Dendritic cell treated with granulocyte-macrophage colony-stimulating factor and Interleukin-4, amounts not matched to agents 40 ng/mL and 50 ng/mL, for 4 days (primary cell): ENCODE measurements at regions of chr1 and their contacts with region 1.

Region 1: DNA sequence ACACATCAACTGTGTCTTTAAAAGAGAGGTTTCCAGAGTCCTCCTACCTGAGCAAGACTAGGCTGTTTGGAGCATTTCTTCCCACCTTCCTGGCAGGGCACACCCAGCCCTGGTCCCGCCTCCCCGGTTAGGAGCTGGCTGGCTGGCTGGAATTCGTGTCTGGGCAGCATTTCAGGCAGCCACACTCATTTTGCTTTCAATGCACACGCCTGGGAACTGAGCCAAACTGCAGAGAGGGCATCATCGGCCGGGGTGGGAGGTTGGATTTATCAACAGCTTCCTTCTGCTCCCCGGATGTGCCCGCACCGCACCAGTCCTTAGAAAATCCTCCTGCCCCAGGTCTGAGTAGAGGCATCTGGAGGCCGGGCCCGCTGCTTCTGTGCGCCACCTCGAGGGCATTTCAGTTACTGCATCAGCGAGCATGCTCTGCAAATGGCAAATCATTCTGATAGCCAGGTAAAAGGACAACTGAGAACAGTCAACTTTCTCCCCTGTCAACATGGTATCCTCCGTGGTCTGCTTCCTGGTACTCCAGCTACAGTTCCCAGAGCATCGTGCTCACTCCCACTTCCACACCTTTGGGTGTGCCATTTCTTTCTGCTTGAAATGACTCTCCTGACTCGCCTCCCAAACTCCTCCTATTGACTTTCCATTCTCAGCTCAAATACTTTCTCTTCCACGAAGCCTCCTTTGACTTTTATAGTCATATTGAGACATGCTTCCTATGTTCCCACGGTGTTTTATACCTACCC is 20.6 kb downstream of the TCEA3 start:
- H3K4me3 Mint-ChIP-seq: no peak overlapping the region
- H3K27ac Mint-ChIP-seq: no peak overlapping the region
- H3K4me1 Mint-ChIP-seq: peaks cover 41% of the 10 kb centered on the region
- H3K27me3 Mint-ChIP-seq: no peaks in the 10 kb centered on the region

Region 2: DNA sequence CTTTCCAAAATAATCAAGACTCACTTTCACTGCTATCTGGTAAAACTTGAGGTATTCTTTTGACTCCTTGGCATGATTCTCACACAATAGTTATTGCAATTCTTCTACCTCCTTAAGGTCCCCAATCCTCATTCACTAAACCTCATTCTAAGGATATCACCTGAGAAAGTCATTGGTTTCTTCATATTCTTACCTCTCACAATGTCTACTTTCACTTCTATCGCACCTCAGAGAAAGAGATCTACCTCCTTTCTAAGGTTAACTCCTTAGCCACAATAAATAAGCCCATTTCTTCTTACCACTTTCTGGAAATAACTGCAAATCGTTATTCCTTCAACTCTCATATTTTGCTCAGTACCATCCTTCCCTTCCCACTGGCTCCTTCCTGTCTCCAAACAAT is 78.5 kb before region 1 on chr1:
- intact Hi-C with region 1: loop called (anchors 5 kb)
- H3K4me3 Mint-ChIP-seq: no peak overlapping the region
- H3K27ac Mint-ChIP-seq: no peak overlapping the region
- H3K4me1 Mint-ChIP-seq: peaks cover 11% of the 10 kb centered on the region
- H3K27me3 Mint-ChIP-seq: no peaks in the 10 kb centered on the region

Region 3: DNA sequence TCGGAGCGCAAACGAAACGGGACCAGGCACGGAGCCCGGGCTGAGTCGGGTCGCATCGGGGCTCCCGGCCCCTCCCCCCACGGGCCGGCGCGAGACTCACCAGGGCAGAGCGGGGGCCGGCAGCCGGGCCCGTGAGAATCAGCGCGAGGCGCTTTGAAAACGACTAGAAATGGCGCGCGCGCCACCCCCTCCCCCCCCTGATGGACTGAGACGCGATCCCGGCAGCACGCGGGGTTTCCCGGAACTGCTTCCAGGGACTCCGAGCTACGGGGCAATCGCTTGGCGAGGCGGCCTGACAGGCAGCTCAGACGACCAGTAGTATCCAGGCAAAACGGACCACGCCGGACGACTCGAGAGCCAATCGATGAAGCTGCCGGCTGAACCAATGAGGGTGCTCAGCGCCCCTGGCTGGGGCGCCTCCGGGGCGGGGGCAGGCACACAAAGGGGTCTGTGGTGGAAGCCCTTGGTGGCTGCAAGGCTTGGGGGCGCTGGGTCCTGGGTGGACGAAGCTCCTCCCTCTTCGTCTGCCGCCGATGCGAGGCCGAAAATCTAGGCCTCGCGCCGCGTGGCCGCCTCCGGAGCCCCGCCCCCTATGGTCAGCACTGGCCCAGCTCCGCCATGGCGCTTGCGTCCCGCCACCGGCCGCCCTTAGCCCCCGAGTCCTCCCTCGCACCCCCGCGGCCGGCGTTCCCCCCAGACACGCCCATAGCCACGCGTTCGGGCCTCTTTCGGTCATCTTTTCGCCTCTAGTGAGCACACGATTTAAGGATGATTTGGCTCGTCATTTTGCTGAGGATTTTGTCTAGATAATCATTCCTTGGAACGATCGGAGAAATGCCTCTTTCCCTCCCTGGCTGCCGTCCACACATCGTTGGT is 59.6 kb before region 1 on chr1 and contains the start of gene HNRNPR:
- intact Hi-C with region 1: loop called (anchors 2 kb)
- H3K4me3 Mint-ChIP-seq: peak within 1 kb of the TSS; percentile 88
- H3K27ac Mint-ChIP-seq: peak within 1 kb of the TSS; percentile 97
- H3K4me1 Mint-ChIP-seq: peaks cover 42% of the 10 kb centered on the region
- H3K27me3 Mint-ChIP-seq: no peaks in the 10 kb centered on the region

Region 4: GRCh38 chr1:23367791-23368561 is 35.9 kb before region 1 on chr1:
- intact Hi-C with region 1: loop called (anchors 2 kb)
- H3K4me3 Mint-ChIP-seq: peak overlapping the region; percentile 98
- H3K27ac Mint-ChIP-seq: peak overlapping the region; percentile 95
- H3K4me1 Mint-ChIP-seq: peaks cover 40% of the 10 kb centered on the region
- H3K27me3 Mint-ChIP-seq: peaks cover 2% of the 10 kb centered on the region